ENCODE measurements at regions of chr5 and their contacts with region 1.

Region 1: DNA sequence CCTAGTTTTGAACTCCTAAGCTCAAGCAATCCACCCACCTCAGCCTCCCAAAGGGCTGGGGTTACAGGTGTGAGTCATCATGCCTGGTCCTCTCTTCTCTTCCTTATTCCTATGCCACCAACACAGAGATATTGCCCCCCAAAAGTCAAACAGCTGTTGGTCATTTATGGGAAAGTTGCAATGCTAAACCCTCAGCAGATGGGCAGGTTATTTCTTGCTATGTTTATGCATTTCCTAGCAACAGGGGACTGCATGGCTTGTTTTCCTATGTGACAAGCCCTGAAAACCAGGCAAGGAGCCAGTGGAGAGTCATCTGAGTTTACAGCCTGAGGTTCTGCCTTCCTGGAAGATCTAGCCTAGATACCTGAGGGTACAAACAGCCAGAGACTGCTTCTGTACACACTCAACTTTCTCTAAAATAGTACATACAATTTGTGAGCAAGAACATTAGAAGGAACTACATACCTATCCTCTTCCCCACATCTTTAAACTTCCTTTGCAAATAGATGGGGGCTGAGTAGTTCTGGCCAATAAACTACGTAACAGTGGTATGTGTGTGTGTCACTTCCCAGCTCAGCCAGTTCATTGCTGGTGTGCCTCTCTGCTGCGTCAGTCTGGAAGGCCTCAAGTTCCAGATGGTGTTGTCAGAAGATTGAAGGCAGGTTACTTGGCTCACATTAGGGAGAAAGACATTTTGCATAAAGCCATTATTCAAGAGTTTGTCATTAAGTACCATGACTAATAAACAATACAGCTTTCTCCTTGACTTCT is 65.4 kb downstream of the CSNK1A1 start:
- DNase-seq: peak in 2 of 3 donors; percentile 61 to 93
- ATAC-seq: peak; percentile 83
- H3K4me3 ChIP-seq: no peak overlapping the region
- H3K4me1 ChIP-seq: peaks cover 46% of the 10 kb centered on the region
- CTCF ChIP-seq: no peak

Region 2: DNA sequence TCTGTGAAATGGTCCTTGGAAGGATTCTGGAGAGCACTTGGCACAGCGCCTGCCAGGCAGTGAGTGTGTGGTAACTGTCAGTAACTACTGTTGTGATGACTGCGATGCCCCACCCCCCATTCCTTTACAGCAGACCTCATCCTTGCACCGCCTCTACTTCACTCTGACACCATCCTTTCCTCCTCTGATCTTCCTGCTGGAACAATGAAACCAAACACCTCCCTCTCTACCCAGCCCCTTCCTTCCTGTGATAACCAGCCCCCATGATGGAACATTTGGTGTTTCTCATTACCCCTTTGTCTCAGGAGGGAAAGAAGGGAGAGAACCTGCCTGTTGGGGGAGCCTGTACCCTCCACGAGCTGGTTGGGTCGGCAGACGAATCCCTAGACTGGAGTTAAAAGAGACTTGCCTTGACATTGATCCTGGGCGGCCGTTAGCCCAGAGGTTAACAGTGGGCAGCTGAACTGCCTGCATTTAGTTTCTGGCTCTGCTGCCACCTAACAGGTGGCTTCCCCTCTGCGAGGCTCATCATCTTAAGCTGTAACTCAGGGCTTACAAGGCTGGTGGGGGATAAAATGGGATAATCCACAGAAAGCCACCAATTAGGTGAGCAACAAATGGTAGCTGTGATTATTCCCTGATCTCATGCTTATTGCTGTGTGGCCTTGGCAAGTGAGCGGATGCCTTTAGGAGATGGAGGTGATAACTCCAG is 174.7 kb before region 1 on chr5:
- intact Hi-C with region 1: no loop called
- DNase-seq: no peak
- ATAC-seq: no peak
- H3K4me3 ChIP-seq: no peak overlapping the region
- H3K4me1 ChIP-seq: no peaks in the 10 kb centered on the region
- CTCF ChIP-seq: no peak

Region 3: DNA sequence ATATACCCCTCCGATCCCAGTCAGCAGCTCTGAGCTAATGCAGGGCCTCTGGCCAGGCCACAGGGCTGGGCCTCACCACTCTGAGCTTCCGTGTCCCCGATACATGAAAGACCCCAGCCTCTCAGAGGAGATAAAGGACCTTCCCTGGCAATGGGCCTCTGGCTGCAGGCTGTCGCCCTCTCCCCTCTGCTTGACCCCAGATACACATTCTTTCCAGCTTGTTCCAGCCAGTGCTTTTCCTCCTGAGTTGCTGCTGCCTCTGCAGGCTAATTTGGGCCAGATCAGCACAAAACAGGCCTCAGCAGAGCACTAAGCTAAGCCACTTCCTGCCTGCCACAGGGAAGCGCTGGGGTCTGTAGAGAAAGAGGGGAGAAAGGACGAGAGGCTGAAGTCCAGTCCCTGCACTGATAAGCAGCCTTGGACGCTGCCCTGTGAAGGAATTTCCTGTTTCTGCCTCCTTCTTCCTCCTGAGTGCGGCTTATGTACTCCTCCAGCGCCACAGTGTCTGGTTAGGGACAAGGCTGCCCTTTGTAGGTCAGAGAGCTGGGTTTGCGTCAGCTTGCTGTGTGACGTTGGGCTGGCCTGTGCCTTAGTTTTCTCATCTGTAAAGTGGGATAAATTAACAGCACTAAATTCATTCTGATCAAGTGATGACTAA is 33.7 kb before region 1 on chr5:
- intact Hi-C with region 1: loop called in 1 of 2 experiments (anchors 5 kb)
- DNase-seq: peak; percentile 72 to 87 (median 77)
- ATAC-seq: peak; percentile 87
- H3K4me3 ChIP-seq: no peak overlapping the region
- H3K4me1 ChIP-seq: peaks cover 37% of the 10 kb centered on the region
- CTCF ChIP-seq: no peak

Measured in mucosa of descending colon (tissue), 3 donors.